ENCODE measurements at regions of chr11 and their contacts with region 1.

Region 1: GRCh38 chr11:20226933-20227332 is 66.7 kb upstream of the DBX1 start:
- DNase-seq: no peak
- ATAC-seq: no peak
- H3K4me3 ChIP-seq: no peak overlapping the region
- H3K27ac ChIP-seq: no peak overlapping the region
- H3K4me1 ChIP-seq: no peaks in the 10 kb centered on the region
- H3K27me3 ChIP-seq: no peaks in the 10 kb centered on the region
- CTCF ChIP-seq: no peak
- EP300 ChIP-seq: no peak
- POLR2A ChIP-seq: no peak
- RAD21 ChIP-seq: no peak

Region 2: GRCh38 chr11:20274031-20274430 is 47.1 kb after region 1 on chr11:
- CTCF ChIA-PET with region 1: no interaction called
- POLR2A ChIA-PET with region 1: no interaction called
- in situ Hi-C with region 1: no loop called
- intact Hi-C with region 1: no loop called
- DNase-seq: no peak
- ATAC-seq: no peak
- H3K4me3 ChIP-seq: no peak overlapping the region
- H3K27ac ChIP-seq: no peak overlapping the region
- H3K4me1 ChIP-seq: no peaks in the 10 kb centered on the region
- H3K27me3 ChIP-seq: peaks cover 1 to 36% of the 10 kb centered on the region in 2 experiments; a peak in 3 of 5 replicates
- CTCF ChIP-seq: no peak
- EP300 ChIP-seq: no peak
- POLR2A ChIP-seq: no peak
- RAD21 ChIP-seq: no peak

Region 3: GRCh38 chr11:20909995-20910726 is 683.2 kb after region 1 on chr11:
- CTCF ChIA-PET with region 1: no interaction called
- POLR2A ChIA-PET with region 1: no interaction called
- in situ Hi-C with region 1: no loop called
- intact Hi-C with region 1: loop called (anchors 10 kb)
- DNase-seq: no peak
- ATAC-seq: no peak
- H3K4me3 ChIP-seq: no peak overlapping the region
- H3K27ac ChIP-seq: no peak overlapping the region
- H3K4me1 ChIP-seq: no peaks in the 10 kb centered on the region
- H3K27me3 ChIP-seq: no peaks in the 10 kb centered on the region
- CTCF ChIP-seq: no peak
- EP300 ChIP-seq: no peak
- POLR2A ChIP-seq: no peak
- RAD21 ChIP-seq: no peak

Measured in HepG2 (cell line).